ENCODE measurements at regions of chr12 and their contacts with region 1.

Region 1: GRCh38 chr12:121668750-121669520 is 519 bp downstream of the MORN3 start:
- DNase-seq: peak in 2 of 3 donors; percentile 19 to 31
- H3K4me3 ChIP-seq: no peak overlapping the region
- H3K4me3 Mint-ChIP-seq: no peak overlapping the region
- H3K27ac ChIP-seq: no peak overlapping the region
- H3K27ac Mint-ChIP-seq: peak overlapping the region in 5 of 7 donors; percentile 20 to 79 (median 60)
- H3K4me1 ChIP-seq: peaks cover 38 to 48% of the 10 kb centered on the region in 2 donors
- H3K4me1 Mint-ChIP-seq: peaks cover 49% of the 10 kb centered on the region
- H3K27me3 ChIP-seq: no peaks in the 10 kb centered on the region
- H3K27me3 Mint-ChIP-seq: peaks cover 0 to 6% (median 5%) of the 10 kb centered on the region in 3 donors
- CTCF ChIP-seq: peak; percentile 73

Region 2: GRCh38 chr12:121499929-121500793 is 168.8 kb before region 1 on chr12:
- intact Hi-C with region 1: loop called in 1 of 2 experiments (anchors 5 kb)
- DNase-seq: peak; percentile 53 to 63 (median 55)
- H3K4me3 ChIP-seq: no peak overlapping the region
- H3K4me3 Mint-ChIP-seq: no peak overlapping the region
- H3K27ac ChIP-seq: no peak overlapping the region
- H3K27ac Mint-ChIP-seq: peak overlapping the region in 2 of 7 donors; percentile 41 to 46
- H3K4me1 ChIP-seq: peaks cover 6 to 8% of the 10 kb centered on the region in 2 donors
- H3K4me1 Mint-ChIP-seq: peaks cover 8% of the 10 kb centered on the region
- H3K27me3 ChIP-seq: no peaks in the 10 kb centered on the region
- H3K27me3 Mint-ChIP-seq: peaks cover 0 to 3% (median 2%) of the 10 kb centered on the region in 3 donors
- CTCF ChIP-seq: peak; percentile 97

Region 3: GRCh38 chr12:121545480-121545879 is 123.5 kb before region 1 on chr12:
- intact Hi-C with region 1: loop called in 1 of 2 experiments (anchors 5 kb)
- DNase-seq: no peak
- H3K4me3 ChIP-seq: no peak overlapping the region
- H3K4me3 Mint-ChIP-seq: no peak overlapping the region
- H3K27ac ChIP-seq: no peak overlapping the region
- H3K27ac Mint-ChIP-seq: no peak overlapping the region
- H3K4me1 ChIP-seq: peaks cover 28 to 42% of the 10 kb centered on the region in 2 donors
- H3K4me1 Mint-ChIP-seq: peaks cover 42% of the 10 kb centered on the region
- H3K27me3 ChIP-seq: no peaks in the 10 kb centered on the region
- H3K27me3 Mint-ChIP-seq: peaks cover 0 to 2% (median 0%) of the 10 kb centered on the region in 3 donors
- CTCF ChIP-seq: no peak